ENCODE measurements at regions of chr1 and their contacts with region 1.

Region 1: DNA sequence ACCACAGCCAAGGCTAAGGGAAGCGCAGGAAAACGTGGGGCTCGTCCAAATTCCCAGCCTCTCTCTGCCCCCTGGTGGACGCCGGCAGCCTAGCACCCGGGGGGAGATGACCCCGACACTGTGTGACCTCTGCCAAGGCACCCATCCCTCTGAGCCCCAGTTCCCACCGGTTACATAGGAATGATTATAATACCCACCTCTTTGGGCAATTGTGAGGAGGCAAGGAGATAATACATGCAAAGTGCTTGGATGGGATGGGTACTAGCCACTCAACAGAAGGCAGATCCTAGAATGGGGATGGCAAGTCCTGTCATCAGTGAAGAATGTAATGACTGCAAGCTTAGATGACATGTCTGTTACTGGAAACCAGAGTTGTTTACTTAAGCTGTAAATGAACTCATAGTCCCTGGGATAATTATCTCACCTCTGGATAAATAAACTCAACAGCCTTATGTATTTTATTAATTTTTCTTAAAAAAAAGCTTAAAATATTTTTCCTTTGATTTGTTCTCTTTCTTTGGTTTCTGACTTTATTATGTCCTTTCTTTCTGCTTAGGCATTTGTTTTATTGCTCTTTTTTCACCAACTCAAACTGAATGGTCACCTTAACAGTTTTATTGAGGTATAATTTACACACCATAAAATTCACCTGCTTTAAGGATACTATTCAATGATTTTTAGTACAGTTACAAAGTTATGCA is 11.3 kb upstream of the BMP8B start:
- DNase-seq: peak; percentile 17
- H3K4me3 ChIP-seq: no peak overlapping the region
- H3K27me3 ChIP-seq: peaks cover 4% of the 10 kb centered on the region; the same call in 1 of the 2 replicates
- CTCF ChIP-seq: peak; percentile 86

Region 2: GRCh38 chr1:39761525-39762260 is 38.2 kb before region 1 on chr1:
- CTCF ChIA-PET with region 1: no interaction called
- POLR2A ChIA-PET with region 1: no interaction called
- DNase-seq: no peak
- H3K4me3 ChIP-seq: no peak overlapping the region
- H3K27me3 ChIP-seq: no peaks in the 10 kb centered on the region
- CTCF ChIP-seq: no peak

Region 3: GRCh38 chr1:39788758-39789570 is 11.0 kb before region 1 on chr1 and contains the start of gene BMP8B:
- CTCF ChIA-PET with region 1: interaction called, 12 read pairs
- POLR2A ChIA-PET with region 1: no interaction called
- DNase-seq: no peak
- H3K4me3 ChIP-seq: peak within 1 kb of the TSS; percentile 33
- H3K27me3 ChIP-seq: peaks cover 23% of the 10 kb centered on the region
- CTCF ChIP-seq: no peak
- polyA plus RNA-seq, gene BMP8B: 0.01 TPM in 2 replicates

Region 4: GRCh38 chr1:39816415-39817090 is 16.6 kb after region 1 on chr1:
- CTCF ChIA-PET with region 1: no interaction called
- POLR2A ChIA-PET with region 1: no interaction called
- DNase-seq: peak; percentile 65
- H3K4me3 ChIP-seq: no peak overlapping the region
- H3K27me3 ChIP-seq: peaks cover 3% of the 10 kb centered on the region
- CTCF ChIP-seq: peak; percentile 78

Region 5: GRCh38 chr1:40130892-40131291 is 331.0 kb after region 1 on chr1:
- CTCF ChIA-PET with region 1: no interaction called
- POLR2A ChIA-PET with region 1: no interaction called
- DNase-seq: no peak
- H3K4me3 ChIP-seq: no peak overlapping the region
- H3K27me3 ChIP-seq: peaks cover 8% of the 10 kb centered on the region
- CTCF ChIP-seq: no peak

Measured in BJ (cell line).